ENCODE measurements at regions of chr6 and their contacts with region 1.

Region 1: GRCh38 chr6:7154341-7155139 is 46.8 kb downstream of the RREB1 start:
- DNase-seq: peak; percentile 80
- ATAC-seq: peak; percentile 84
- H3K4me3 ChIP-seq: peak overlapping the region; percentile 58; the same call in 1 of the 2 replicates
- H3K27ac ChIP-seq: peak overlapping the region; percentile 93
- H3K4me1 ChIP-seq: peaks cover 80% of the 10 kb centered on the region
- H3K27me3 ChIP-seq: no peaks in the 10 kb centered on the region
- CTCF ChIP-seq: no peak
- EP300 ChIP-seq: peak; percentile 88 to 92; a peak in 3 of 4 replicates
- POLR2A ChIP-seq: peak; percentile 51; the same call in 1 of the 2 replicates
- RAD21 ChIP-seq: no peak

Region 2: DNA sequence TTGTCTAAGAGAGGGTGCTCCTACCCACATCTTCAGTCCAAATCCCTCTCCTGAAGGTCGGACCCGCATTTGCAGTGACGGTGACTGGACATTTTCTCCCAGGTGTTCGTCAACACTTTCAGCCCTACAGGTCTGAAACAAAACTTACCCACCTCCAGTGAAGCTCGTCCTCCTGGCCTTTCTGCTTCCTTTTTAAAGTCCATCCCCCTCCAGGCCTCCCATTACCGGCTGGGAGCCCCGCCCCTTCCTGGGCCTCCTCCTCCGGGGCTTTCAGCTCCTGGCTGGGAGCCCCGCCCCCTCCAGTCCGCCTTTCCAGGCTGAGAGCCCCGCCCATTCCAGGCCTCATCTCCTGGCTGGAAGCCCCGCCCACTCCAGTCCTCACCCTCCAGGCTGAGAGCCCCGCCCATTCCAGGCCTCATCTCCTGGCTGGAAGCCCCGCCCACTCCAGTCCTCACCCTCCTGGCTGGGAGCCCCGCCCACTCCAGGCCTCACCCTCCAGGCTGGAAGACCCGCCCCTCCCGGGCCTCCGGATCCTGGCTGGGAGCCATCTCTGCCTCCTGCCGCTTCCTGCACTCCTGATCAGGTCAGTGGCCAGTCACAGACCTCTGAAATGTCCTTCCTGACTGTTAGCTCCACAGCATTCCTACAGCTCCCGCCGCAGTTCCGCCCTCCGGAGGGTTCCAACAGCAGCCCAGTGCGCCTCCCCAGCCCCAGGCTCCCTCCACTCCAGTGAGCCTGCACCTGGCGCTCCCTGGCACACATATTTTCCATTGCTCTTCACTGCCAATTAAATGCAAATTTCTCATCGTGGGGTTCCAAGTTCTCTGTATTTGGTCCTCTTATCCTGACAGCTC is 467.6 kb before region 1 on chr6:
- CTCF ChIA-PET with region 1: interaction called, 3 read pairs
- POLR2A ChIA-PET with region 1: no interaction called
- RAD21 ChIA-PET with region 1: interaction called, 5 read pairs
- SMC1A ChIA-PET with region 1: interaction called, 4 read pairs
- in situ Hi-C with region 1: no loop called
- intact Hi-C with region 1: loop called (anchors 1 kb)
- DNase-seq: no peak
- ATAC-seq: no peak
- H3K4me3 ChIP-seq: no peak overlapping the region
- H3K27ac ChIP-seq: no peak overlapping the region
- H3K4me1 ChIP-seq: peaks cover 38% of the 10 kb centered on the region
- H3K27me3 ChIP-seq: no peaks in the 10 kb centered on the region
- CTCF ChIP-seq: no peak
- EP300 ChIP-seq: no peak
- POLR2A ChIP-seq: no peak
- RAD21 ChIP-seq: no peak

Region 3: GRCh38 chr6:7107578-7108195 is 46.9 kb before region 1 on chr6 and contains the start of gene RREB1:
- CTCF ChIA-PET with region 1: interaction called, 3 read pairs
- POLR2A ChIA-PET with region 1: interaction called, 6 read pairs
- RAD21 ChIA-PET with region 1: interaction called, 30 read pairs
- SMC1A ChIA-PET with region 1: interaction called, 59 read pairs
- in situ Hi-C with region 1: no loop called
- intact Hi-C with region 1: loop called (anchors 2 kb)
- DNase-seq: no peak
- ATAC-seq: peak; percentile 76
- H3K4me3 ChIP-seq: peak within 1 kb of the TSS; percentile 97
- H3K27ac ChIP-seq: peak within 1 kb of the TSS; percentile 94
- H3K4me1 ChIP-seq: peaks cover 5% of the 10 kb centered on the region
- H3K27me3 ChIP-seq: no peaks in the 10 kb centered on the region
- CTCF ChIP-seq: no peak
- EP300 ChIP-seq: no peak
- POLR2A ChIP-seq: peak; percentile 33
- RAD21 ChIP-seq: peak; percentile 1; the same call in 1 of the 2 replicates
- polyA plus RNA-seq, gene RREB1: 1.9 to 2.1 TPM

Region 4: GRCh38 chr6:7129784-7130569 is 24.6 kb before region 1 on chr6:
- CTCF ChIA-PET with region 1: interaction called, 63 read pairs
- POLR2A ChIA-PET with region 1: interaction called, 15 read pairs
- RAD21 ChIA-PET with region 1: interaction called, 87 read pairs
- SMC1A ChIA-PET with region 1: interaction called, 256 read pairs
- in situ Hi-C with region 1: no loop called
- intact Hi-C with region 1: no loop called
- DNase-seq: no peak
- ATAC-seq: peak; percentile 31
- H3K4me3 ChIP-seq: no peak overlapping the region
- H3K27ac ChIP-seq: peak overlapping the region; percentile 43; the same call in 1 of the 2 replicates
- H3K4me1 ChIP-seq: peaks cover 57% of the 10 kb centered on the region
- H3K27me3 ChIP-seq: no peaks in the 10 kb centered on the region
- CTCF ChIP-seq: no peak
- EP300 ChIP-seq: no peak
- POLR2A ChIP-seq: no peak
- RAD21 ChIP-seq: no peak

Region 5: DNA sequence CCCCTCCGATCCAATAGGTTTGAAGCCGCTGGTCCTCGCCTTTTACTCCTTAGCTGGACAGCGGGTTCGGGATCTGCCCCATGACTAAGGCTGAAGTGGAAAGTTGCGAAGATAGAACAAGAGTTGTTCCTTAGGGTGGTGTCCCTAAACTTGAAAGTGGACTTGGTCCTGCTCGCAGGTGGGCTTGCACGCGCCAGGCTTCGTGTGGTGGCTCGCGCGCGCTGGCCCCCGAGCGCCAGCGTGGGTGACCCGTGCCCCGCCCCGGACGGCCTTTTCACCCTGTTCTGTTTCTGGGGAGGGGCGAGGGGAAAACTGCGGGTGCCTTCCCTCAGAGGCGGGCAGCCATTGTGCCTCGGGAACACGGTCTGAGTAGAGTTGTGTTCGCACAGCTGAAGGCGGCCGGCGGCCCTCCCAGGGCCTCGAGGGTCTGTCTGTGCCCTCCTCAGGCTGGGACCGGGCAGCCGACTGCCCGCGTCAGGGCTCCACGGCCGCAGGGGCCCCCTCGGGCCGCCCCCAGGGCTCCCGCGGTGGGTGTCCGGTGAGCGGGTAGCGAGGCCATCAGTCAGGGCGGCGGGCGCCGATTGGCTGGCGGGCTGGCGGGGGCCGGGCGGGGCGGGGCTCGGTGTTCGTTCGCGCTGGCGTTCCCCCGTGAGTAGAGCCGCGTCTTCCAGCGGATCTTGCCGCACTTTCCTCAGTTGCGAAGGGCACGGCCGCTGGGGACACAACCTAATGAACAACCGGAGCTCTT is 13.7 kb before region 1 on chr6:
- CTCF ChIA-PET with region 1: interaction called, 63 read pairs
- POLR2A ChIA-PET with region 1: interaction called, 63 read pairs
- RAD21 ChIA-PET with region 1: interaction called, 87 read pairs
- SMC1A ChIA-PET with region 1: interaction called, 256 read pairs
- in situ Hi-C with region 1: no loop called
- intact Hi-C with region 1: loop called (anchors 1 kb)
- DNase-seq: no peak
- ATAC-seq: peak; percentile 74
- H3K4me3 ChIP-seq: peak overlapping the region; percentile 81
- H3K27ac ChIP-seq: peak overlapping the region; percentile 87
- H3K4me1 ChIP-seq: peaks cover 85% of the 10 kb centered on the region
- H3K27me3 ChIP-seq: no peaks in the 10 kb centered on the region
- CTCF ChIP-seq: no peak
- EP300 ChIP-seq: no peak
- POLR2A ChIP-seq: peak; percentile 82
- RAD21 ChIP-seq: no peak

Region 6: DNA sequence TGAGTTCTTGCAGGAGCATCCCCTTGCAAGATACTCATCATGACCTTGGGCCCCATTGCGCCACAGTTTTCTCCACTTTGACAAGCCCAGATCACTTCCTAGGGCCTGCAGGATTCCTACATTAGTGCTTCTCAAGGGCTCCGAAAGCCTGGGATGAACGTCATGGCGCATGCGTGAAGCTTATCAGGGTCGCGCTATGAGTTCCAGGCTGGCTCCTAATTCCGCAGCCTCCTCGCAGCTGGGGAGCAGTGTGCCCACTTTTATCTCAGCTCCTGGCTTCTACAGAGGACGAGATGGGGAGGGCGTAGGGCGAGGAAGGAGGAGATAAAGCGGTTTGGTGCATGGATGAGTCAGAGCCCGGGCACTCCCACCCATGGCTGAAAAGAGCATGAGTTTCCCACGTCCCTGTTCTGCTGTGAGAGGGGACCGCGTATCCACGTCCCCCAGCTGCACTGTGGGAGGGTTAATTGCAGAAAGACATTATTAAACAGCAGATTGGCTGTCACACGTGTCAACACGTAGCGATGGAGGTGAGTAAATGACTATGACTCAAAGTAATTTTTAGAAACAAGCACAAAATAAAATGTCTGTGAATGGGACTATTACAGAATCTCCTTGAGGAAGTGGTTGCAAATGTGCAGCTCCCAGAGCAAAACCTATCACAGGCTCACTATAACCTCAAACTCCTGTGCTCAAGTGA is 314.0 kb after region 1 on chr6:
- CTCF ChIA-PET with region 1: no interaction called
- POLR2A ChIA-PET with region 1: no interaction called
- RAD21 ChIA-PET with region 1: no interaction called
- SMC1A ChIA-PET with region 1: no interaction called
- in situ Hi-C with region 1: no loop called
- intact Hi-C with region 1: no loop called
- DNase-seq: no peak
- ATAC-seq: no peak
- H3K4me3 ChIP-seq: no peak overlapping the region
- H3K27ac ChIP-seq: no peak overlapping the region
- H3K4me1 ChIP-seq: no peaks in the 10 kb centered on the region
- H3K27me3 ChIP-seq: no peaks in the 10 kb centered on the region
- CTCF ChIP-seq: no peak
- EP300 ChIP-seq: no peak
- POLR2A ChIP-seq: no peak
- RAD21 ChIP-seq: no peak